ENCODE measurements at regions of chr22 and their contacts with region 1.

Region 1: DNA sequence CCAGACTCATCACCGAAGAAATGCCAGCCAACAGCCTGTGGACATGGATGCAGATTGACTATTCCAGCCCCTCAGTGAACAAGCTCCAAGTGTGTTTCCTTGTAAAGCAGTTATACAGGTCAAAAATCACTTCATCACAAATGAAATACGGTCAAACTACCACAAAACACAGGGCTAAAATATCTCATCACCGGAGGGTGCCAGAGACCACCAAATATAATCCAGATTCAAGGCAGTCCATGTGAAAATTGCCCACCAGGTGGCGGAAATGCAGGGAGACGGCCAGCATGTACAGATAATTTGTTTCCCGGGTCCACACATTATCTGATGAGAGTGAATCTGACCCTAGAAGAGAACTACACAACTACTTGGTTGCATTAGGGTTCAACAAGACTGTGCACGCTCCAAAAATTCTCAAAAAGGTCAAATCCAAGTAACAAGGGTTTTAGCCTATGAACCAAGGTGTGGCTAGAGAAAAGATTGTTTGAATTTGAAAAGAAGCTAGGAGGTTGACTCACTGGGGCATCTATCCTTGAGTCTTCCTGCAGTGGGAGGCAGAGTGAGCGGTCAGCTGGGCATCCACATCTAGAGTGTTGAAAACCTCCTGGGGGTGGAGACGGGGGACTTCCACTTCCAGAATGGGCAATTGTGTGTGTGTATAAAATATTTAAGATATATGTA is 71.7 kb downstream of the IGLL5 start:
- DNase-seq: peak in 1 of 2 experiments; percentile 51
- H3K4me3 ChIP-seq: no peak overlapping the region
- H3K27ac ChIP-seq: no peak overlapping the region
- H3K4me1 ChIP-seq: no peaks in the 10 kb centered on the region
- H3K27me3 ChIP-seq: peaks cover 7% of the 10 kb centered on the region
- CTCF ChIP-seq: peak; percentile 84

Region 2: GRCh38 chr22:22357024-22357883 is 602.0 kb before region 1 on chr22:
- CTCF ChIA-PET with region 1: no interaction called
- POLR2A ChIA-PET with region 1: no interaction called
- intact Hi-C with region 1: loop called (anchors 5 kb)
- DNase-seq: peak; percentile 49 to 65
- H3K4me3 ChIP-seq: no peak overlapping the region
- H3K27ac ChIP-seq: no peak overlapping the region
- H3K4me1 ChIP-seq: no peaks in the 10 kb centered on the region
- H3K27me3 ChIP-seq: peaks cover 10% of the 10 kb centered on the region
- CTCF ChIP-seq: peak; percentile 66

Region 3: GRCh38 chr22:22848364-22848866 is 110.9 kb before region 1 on chr22:
- CTCF ChIA-PET with region 1: no interaction called
- POLR2A ChIA-PET with region 1: no interaction called
- intact Hi-C with region 1: loop called (anchors 5 kb)
- DNase-seq: peak; percentile 33 to 44
- H3K4me3 ChIP-seq: no peak overlapping the region
- H3K27ac ChIP-seq: no peak overlapping the region
- H3K4me1 ChIP-seq: no peaks in the 10 kb centered on the region
- H3K27me3 ChIP-seq: peaks cover 36% of the 10 kb centered on the region
- CTCF ChIP-seq: peak; percentile 88

Region 4: GRCh38 chr22:23281406-23282088 is 322.3 kb after region 1 on chr22:
- CTCF ChIA-PET with region 1: interaction called, 4 read pairs
- POLR2A ChIA-PET with region 1: no interaction called
- intact Hi-C with region 1: loop called (anchors 5 kb)
- DNase-seq: peak; percentile 53 to 79
- H3K4me3 ChIP-seq: no peak overlapping the region; the same call in 1 of the 2 replicates
- H3K27ac ChIP-seq: peak overlapping the region; percentile 63
- H3K4me1 ChIP-seq: peaks cover 18% of the 10 kb centered on the region
- H3K27me3 ChIP-seq: no peaks in the 10 kb centered on the region
- CTCF ChIP-seq: peak; percentile 94

Region 5: DNA sequence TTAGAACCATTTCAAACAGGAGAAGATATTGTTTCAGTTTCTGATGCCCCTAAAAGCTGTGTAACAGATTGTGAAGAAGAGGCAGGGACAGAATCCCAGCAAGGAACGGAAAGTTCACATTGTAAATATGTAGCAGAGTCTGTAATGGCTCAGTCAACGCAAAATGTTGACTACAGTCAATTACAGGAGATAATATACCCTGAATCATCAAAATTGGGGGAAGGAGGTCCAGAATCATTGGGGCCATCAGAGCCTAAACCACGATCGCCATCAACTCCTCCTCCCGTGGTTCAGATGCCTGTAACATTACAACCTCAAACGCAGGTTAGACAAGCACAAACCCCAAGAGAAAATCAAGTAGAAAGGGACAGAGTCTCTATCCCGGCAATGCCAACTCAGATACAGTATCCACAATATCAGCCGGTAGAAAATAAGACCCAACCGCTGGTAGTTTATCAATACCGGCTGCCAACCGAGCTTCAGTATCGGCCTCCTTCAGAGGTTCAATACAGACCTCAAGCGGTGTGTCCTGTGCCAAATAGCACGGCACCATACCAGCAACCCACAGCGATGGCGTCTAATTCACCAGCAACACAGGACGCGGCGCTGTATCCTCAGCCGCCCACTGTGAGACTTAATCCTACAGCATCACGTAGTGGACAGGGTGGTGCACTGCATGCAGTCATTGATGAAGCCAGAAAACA is 580.0 kb after region 1 on chr22:
- CTCF ChIA-PET with region 1: no interaction called
- POLR2A ChIA-PET with region 1: no interaction called
- intact Hi-C with region 1: loop called (anchors 2 kb)
- DNase-seq: peak; percentile 43 to 44
- H3K4me3 ChIP-seq: no peak overlapping the region
- H3K27ac ChIP-seq: no peak overlapping the region
- H3K4me1 ChIP-seq: no peaks in the 10 kb centered on the region
- H3K27me3 ChIP-seq: peaks cover 70% of the 10 kb centered on the region
- CTCF ChIP-seq: peak; percentile 79